ENCODE measurements at regions of chr9 and their contacts with region 1.

Region 1: DNA sequence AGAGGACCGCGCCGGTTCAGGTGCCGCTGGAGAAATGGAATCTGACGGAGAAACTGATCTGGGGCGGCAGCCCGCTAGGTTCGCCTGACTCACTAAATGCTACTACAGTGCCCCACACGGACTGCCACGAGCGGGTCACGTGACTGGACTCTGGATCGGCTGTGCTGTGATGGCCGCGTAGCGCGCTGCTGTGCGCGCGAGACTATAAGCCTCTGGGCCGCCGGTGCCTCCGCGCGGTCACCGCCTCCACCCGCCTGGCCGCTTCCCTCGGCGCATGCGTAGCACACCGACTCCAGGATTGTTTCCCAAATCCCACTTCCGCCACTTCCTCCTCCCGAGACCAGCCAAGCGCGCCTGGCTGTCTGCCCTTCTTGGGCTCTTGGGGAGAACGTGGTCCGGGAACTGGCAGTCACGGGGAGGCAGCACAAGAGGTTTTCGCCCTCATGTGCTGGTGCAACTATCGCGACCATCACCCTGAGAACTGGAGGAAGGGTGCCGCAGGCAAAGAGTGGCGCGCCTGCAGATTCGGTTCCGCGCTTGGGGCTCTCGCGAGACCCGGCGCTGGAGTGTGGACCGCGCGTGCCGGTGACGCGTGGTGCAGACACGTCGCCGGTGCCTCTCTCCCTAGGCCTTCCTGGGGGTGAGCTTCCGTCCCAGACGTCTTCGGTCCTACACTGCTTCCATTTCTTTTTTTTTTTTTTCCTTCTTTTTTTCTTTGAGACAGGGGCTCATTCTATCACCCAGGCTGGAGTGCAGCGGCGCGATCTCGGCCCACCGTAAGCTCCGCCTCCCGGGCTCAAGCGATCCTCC is 35.8 kb upstream of the GLDC start:
- DNase-seq: peak; percentile 71 to 95 (median 90)
- ATAC-seq: peak; percentile 90
- H3K4me3 ChIP-seq: peak overlapping the region; percentile 89
- H3K4me3 Mint-ChIP-seq: peak overlapping the region; percentile 88 to 98 (median 95)
- H3K27ac ChIP-seq: peak overlapping the region; percentile 91
- H3K27ac Mint-ChIP-seq: peak overlapping the region; percentile 97 to 100 (median 99)
- H3K4me1 ChIP-seq: peaks cover 0 to 6% of the 10 kb centered on the region in 2 donors
- H3K4me1 Mint-ChIP-seq: peaks cover 7 to 31% (median 20%) of the 10 kb centered on the region in 7 donors
- H3K27me3 ChIP-seq: no peaks in the 10 kb centered on the region
- H3K27me3 Mint-ChIP-seq: no peaks in the 10 kb centered on the region

Region 2: GRCh38 chr9:5450359-5451091 is 1230.8 kb before region 1 on chr9 and contains the start of gene CD274:
- CTCF ChIA-PET with region 1: no interaction called
- POLR2A ChIA-PET with region 1: no interaction called
- intact Hi-C with region 1: loop called in 1 of 2 experiments (anchors 2 kb)
- DNase-seq: peak; percentile 61 to 89 (median 80)
- ATAC-seq: peak; percentile 95
- H3K4me3 ChIP-seq: peak within 1 kb of the TSS; percentile 78
- H3K4me3 Mint-ChIP-seq: peak within 1 kb of the TSS; percentile 92 to 98 (median 95)
- H3K27ac ChIP-seq: peak within 1 kb of the TSS; percentile 94
- H3K27ac Mint-ChIP-seq: peak within 1 kb of the TSS; percentile 97 to 99 (median 98)
- H3K4me1 ChIP-seq: peaks cover 0 to 11% of the 10 kb centered on the region in 2 donors
- H3K4me1 Mint-ChIP-seq: peaks cover 33 to 69% (median 62%) of the 10 kb centered on the region in 7 donors
- H3K27me3 ChIP-seq: no peaks in the 10 kb centered on the region
- H3K27me3 Mint-ChIP-seq: no peaks in the 10 kb centered on the region
- total RNA-seq, gene CD274: 2.9 to 38.7 (median 7.8) TPM

Region 3: GRCh38 chr9:6055213-6055612 is 626.1 kb before region 1 on chr9:
- CTCF ChIA-PET with region 1: no interaction called
- POLR2A ChIA-PET with region 1: no interaction called
- intact Hi-C with region 1: loop called in 1 of 2 experiments (anchors 10 kb)
- DNase-seq: peak in 7 of 9 donors; percentile 42 to 69 (median 63)
- ATAC-seq: peak; percentile 86
- H3K4me3 ChIP-seq: no peak overlapping the region
- H3K4me3 Mint-ChIP-seq: no peak overlapping the region
- H3K27ac ChIP-seq: no peak overlapping the region
- H3K27ac Mint-ChIP-seq: peak overlapping the region in 2 of 9 donors; percentile 16 to 47
- H3K4me1 ChIP-seq: no peaks in the 10 kb centered on the region
- H3K4me1 Mint-ChIP-seq: peaks cover 0 to 7% (median 0%) of the 10 kb centered on the region in 7 donors
- H3K27me3 ChIP-seq: no peaks in the 10 kb centered on the region
- H3K27me3 Mint-ChIP-seq: peaks cover 0 to 19% (median 5%) of the 10 kb centered on the region in 5 donors

Region 4: DNA sequence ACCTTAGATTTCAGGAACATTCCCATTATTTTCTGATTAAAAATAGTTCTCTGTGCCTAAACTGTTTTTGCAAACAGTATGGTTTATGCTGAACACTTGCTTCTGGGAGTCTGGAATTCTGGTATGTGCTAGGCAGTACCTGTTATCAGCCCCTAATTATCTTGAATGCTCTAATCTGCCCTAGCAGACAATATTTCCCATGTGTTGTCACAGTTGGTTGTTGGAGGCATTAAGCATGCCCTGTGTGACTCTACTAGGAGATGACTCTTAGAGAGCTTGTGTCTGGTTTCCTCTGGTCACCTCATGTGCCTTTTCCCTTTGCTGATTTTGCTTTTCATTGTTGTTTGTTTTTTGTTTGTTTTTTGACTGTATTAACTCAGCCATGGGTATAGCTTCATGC is 231.7 kb before region 1 on chr9:
- CTCF ChIA-PET with region 1: no interaction called
- POLR2A ChIA-PET with region 1: no interaction called
- intact Hi-C with region 1: no loop called
- DNase-seq: no peak
- ATAC-seq: no peak
- H3K4me3 ChIP-seq: no peak overlapping the region
- H3K4me3 Mint-ChIP-seq: peak overlapping the region in 8 of 10 donors; percentile 8 to 55 (median 28)
- H3K27ac ChIP-seq: no peak overlapping the region
- H3K27ac Mint-ChIP-seq: peak overlapping the region in 3 of 9 donors; percentile 23 to 71 (median 38)
- H3K4me1 ChIP-seq: peaks cover 11 to 25% of the 10 kb centered on the region in 2 donors
- H3K4me1 Mint-ChIP-seq: peaks cover 46 to 78% (median 67%) of the 10 kb centered on the region in 7 donors
- H3K27me3 ChIP-seq: no peaks in the 10 kb centered on the region
- H3K27me3 Mint-ChIP-seq: no peaks in the 10 kb centered on the region

Region 5: GRCh38 chr9:6584881-6585597 is 96.3 kb before region 1 on chr9:
- CTCF ChIA-PET with region 1: interaction called, 5 read pairs
- POLR2A ChIA-PET with region 1: interaction called, 4 read pairs
- intact Hi-C with region 1: loop called (anchors 1 kb)
- DNase-seq: peak in 6 of 9 donors; percentile 2 to 35 (median 26)
- ATAC-seq: no peak
- H3K4me3 ChIP-seq: no peak overlapping the region
- H3K4me3 Mint-ChIP-seq: no peak overlapping the region
- H3K27ac ChIP-seq: no peak overlapping the region
- H3K27ac Mint-ChIP-seq: no peak overlapping the region
- H3K4me1 ChIP-seq: no peaks in the 10 kb centered on the region
- H3K4me1 Mint-ChIP-seq: peaks cover 0 to 3% (median 0%) of the 10 kb centered on the region in 7 donors
- H3K27me3 ChIP-seq: no peaks in the 10 kb centered on the region
- H3K27me3 Mint-ChIP-seq: peaks cover 0 to 11% (median under 1%) of the 10 kb centered on the region in 5 donors

Region 6: GRCh38 chr9:6667633-6668280 is 13.6 kb before region 1 on chr9:
- CTCF ChIA-PET with region 1: interaction called, 3 read pairs
- POLR2A ChIA-PET with region 1: interaction called, 5 read pairs
- intact Hi-C with region 1: loop called in 1 of 2 experiments (anchors 1 kb)
- DNase-seq: peak in 2 of 9 donors; percentile 11 to 14
- ATAC-seq: no peak
- H3K4me3 ChIP-seq: no peak overlapping the region
- H3K4me3 Mint-ChIP-seq: no peak overlapping the region
- H3K27ac ChIP-seq: no peak overlapping the region
- H3K27ac Mint-ChIP-seq: no peak overlapping the region
- H3K4me1 ChIP-seq: no peaks in the 10 kb centered on the region
- H3K4me1 Mint-ChIP-seq: peaks cover 0 to 4% (median 0%) of the 10 kb centered on the region in 7 donors
- H3K27me3 ChIP-seq: no peaks in the 10 kb centered on the region
- H3K27me3 Mint-ChIP-seq: peaks cover 0 to 3% (median 0%) of the 10 kb centered on the region in 5 donors

Region 7: GRCh38 chr9:6715755-6716643 is 34.6 kb after region 1 on chr9:
- CTCF ChIA-PET with region 1: no interaction called
- POLR2A ChIA-PET with region 1: interaction called, 18 read pairs
- intact Hi-C with region 1: loop called (anchors 1 kb)
- DNase-seq: peak; percentile 44 to 71 (median 58)
- ATAC-seq: peak; percentile 89
- H3K4me3 ChIP-seq: peak overlapping the region; percentile 77
- H3K4me3 Mint-ChIP-seq: peak overlapping the region; percentile 76 to 92 (median 89)
- H3K27ac ChIP-seq: peak overlapping the region; percentile 66
- H3K27ac Mint-ChIP-seq: peak overlapping the region; percentile 84 to 94 (median 90)
- H3K4me1 ChIP-seq: peaks cover 7% of the 10 kb centered on the region in 2 donors
- H3K4me1 Mint-ChIP-seq: peaks cover 0 to 10% (median 7%) of the 10 kb centered on the region in 7 donors
- H3K27me3 ChIP-seq: no peaks in the 10 kb centered on the region
- H3K27me3 Mint-ChIP-seq: no peaks in the 10 kb centered on the region

Measured in naive thymus-derived CD4-positive, alpha-beta T cell (primary cell).